ENCODE measurements at regions of chr6 and their contacts with region 1.

Region 1: GRCh38 chr6:122471107-122472021 is at the start of gene SERINC1:
- DNase-seq: peak; percentile 95 to 97 (median 95)
- H3K4me3 ChIP-seq: peak within 1 kb of the TSS; percentile 88 to 92 (median 89)
- H3K4me3 Mint-ChIP-seq: peak within 1 kb of the TSS; percentile 92 to 100
- H3K27ac ChIP-seq: peak within 1 kb of the TSS; percentile 94 to 100
- H3K27ac Mint-ChIP-seq: peak within 1 kb of the TSS; percentile 99 to 100 (median 100)
- H3K4me1 ChIP-seq: peaks cover 20 to 25% of the 10 kb centered on the region in 2 donors
- H3K4me1 Mint-ChIP-seq: peaks cover 28% of the 10 kb centered on the region
- H3K27me3 ChIP-seq: no peaks in the 10 kb centered on the region
- H3K27me3 Mint-ChIP-seq: peaks cover 0 to 2% (median 0%) of the 10 kb centered on the region in 3 donors
- CTCF ChIP-seq: no peak
- polyA plus RNA-seq, gene SERINC1: 38.9 to 161 (median 125) TPM

Region 2: DNA sequence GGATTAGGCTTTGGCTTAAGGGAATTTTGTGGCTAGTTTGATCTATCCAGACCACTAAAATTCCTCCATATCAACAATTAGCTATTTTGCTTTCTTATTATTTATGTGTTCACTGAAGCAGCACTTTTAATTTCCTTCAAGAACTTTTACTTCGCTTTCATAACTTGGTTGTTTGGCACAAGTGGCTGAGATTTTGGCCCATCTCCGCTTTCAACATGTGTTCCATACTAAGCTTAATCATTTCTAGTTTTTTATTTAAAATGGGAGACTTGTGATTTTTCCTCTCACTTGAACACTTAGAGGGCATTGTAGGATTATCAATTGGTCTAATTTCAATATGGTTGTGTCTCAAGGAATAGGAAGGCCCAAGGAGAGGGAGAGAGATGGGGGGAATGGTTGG is 174.4 kb before region 1 on chr6:
- intact Hi-C with region 1: no loop called
- DNase-seq: no peak
- H3K4me3 ChIP-seq: no peak overlapping the region
- H3K4me3 Mint-ChIP-seq: no peak overlapping the region
- H3K27ac ChIP-seq: no peak overlapping the region
- H3K27ac Mint-ChIP-seq: no peak overlapping the region
- H3K4me1 ChIP-seq: no peaks in the 10 kb centered on the region
- H3K4me1 Mint-ChIP-seq: no peaks in the 10 kb centered on the region
- H3K27me3 ChIP-seq: no peaks in the 10 kb centered on the region
- H3K27me3 Mint-ChIP-seq: peaks cover 0 to 2% (median 1%) of the 10 kb centered on the region in 3 donors
- CTCF ChIP-seq: no peak

Region 3: GRCh38 chr6:122399384-122400158 is 71.8 kb before region 1 on chr6 and contains the start of gene HSF2:
- intact Hi-C with region 1: loop called (anchors 5 to 10 kb)
- DNase-seq: peak; percentile 94 to 97 (median 95)
- H3K4me3 ChIP-seq: peak within 1 kb of the TSS; percentile 82 to 97 (median 94)
- H3K4me3 Mint-ChIP-seq: peak within 1 kb of the TSS; percentile 96 to 97
- H3K27ac ChIP-seq: peak within 1 kb of the TSS; percentile 55 to 73
- H3K27ac Mint-ChIP-seq: peak within 1 kb of the TSS; percentile 66 to 91 (median 86)
- H3K4me1 ChIP-seq: peaks cover 12 to 13% of the 10 kb centered on the region in 2 donors
- H3K4me1 Mint-ChIP-seq: peaks cover 21% of the 10 kb centered on the region
- H3K27me3 ChIP-seq: no peaks in the 10 kb centered on the region
- H3K27me3 Mint-ChIP-seq: no peaks in the 10 kb centered on the region
- CTCF ChIP-seq: no peak
- polyA plus RNA-seq, gene HSF2: 2.3 to 8.8 (median 2.6) TPM

Region 4: DNA sequence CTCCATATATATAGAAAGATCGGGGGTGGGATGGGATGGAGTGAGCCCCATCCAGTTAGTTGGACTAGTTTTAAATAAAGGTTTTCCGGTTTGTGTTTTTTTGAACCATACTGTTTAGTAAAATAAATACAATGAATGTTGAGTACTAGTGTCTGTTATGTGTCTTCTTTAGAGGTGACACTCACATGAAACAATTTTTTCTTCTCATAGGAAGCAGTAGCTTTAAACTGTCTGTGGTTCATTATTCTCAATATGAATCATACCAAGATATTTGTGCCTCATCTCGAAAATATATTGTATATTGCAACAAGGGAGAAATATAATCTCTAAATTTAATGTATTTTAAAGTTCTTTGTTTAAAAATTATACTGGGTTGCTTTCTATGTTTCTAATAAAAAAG is 38.5 kb before region 1 on chr6:
- intact Hi-C with region 1: no loop called
- DNase-seq: no peak
- H3K4me3 ChIP-seq: no peak overlapping the region
- H3K4me3 Mint-ChIP-seq: no peak overlapping the region
- H3K27ac ChIP-seq: no peak overlapping the region
- H3K27ac Mint-ChIP-seq: no peak overlapping the region
- H3K4me1 ChIP-seq: peaks cover 0 to 11% of the 10 kb centered on the region in 2 donors
- H3K4me1 Mint-ChIP-seq: peaks cover 10% of the 10 kb centered on the region
- H3K27me3 ChIP-seq: no peaks in the 10 kb centered on the region
- H3K27me3 Mint-ChIP-seq: no peaks in the 10 kb centered on the region
- CTCF ChIP-seq: no peak

Region 5: DNA sequence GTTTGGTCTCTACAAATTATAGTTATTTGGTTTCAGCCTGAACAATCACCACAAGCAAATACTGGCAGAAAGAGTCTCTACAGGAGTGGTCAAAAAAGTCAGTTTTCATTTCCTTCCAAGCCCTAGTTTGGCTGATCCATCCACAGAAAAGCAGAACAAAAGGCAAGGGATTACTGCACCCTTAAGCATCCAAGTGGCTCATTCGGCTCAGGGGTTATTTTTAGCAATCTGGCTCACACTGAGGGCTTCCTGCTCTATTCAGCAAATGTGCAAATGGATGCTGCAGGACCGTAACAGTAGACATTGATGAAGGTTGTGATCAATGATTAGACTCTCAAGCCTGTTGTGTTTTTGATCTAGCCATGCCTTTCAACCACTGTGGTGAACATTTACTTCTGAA is 246.0 kb after region 1 on chr6:
- intact Hi-C with region 1: loop called in 1 of 2 experiments (anchors 10 kb)
- DNase-seq: peak; percentile 36 to 49 (median 38)
- H3K4me3 ChIP-seq: no peak overlapping the region
- H3K4me3 Mint-ChIP-seq: peak overlapping the region in 1 of 2 donors; percentile 21
- H3K27ac ChIP-seq: no peak overlapping the region
- H3K27ac Mint-ChIP-seq: peak overlapping the region in 5 of 7 donors; percentile 10 to 64 (median 31)
- H3K4me1 ChIP-seq: peaks cover 24 to 39% of the 10 kb centered on the region in 2 donors
- H3K4me1 Mint-ChIP-seq: peaks cover 30% of the 10 kb centered on the region
- H3K27me3 ChIP-seq: no peaks in the 10 kb centered on the region
- H3K27me3 Mint-ChIP-seq: no peaks in the 10 kb centered on the region
- CTCF ChIP-seq: no peak